Stomach (tissue), 19 donors: ENCODE measurements at regions of chr6 and their contacts with region 1.

Region 1: GRCh38 chr6:33161354-33162331 is 30.6 kb downstream of the COL11A2 start:
- DNase-seq: peak; percentile 81 to 88
- H3K4me3 ChIP-seq: peak overlapping the region; percentile 45 to 57 (median 54)
- H3K27ac ChIP-seq: peak overlapping the region; percentile 37 to 75 (median 52)
- H3K4me1 ChIP-seq: peaks cover 14 to 21% (median 17%) of the 10 kb centered on the region in 4 donors
- H3K27me3 ChIP-seq: peaks cover 0 to 6% (median 0%) of the 10 kb centered on the region in 3 donors
- CTCF ChIP-seq: peak in 5 of 7 experiments; percentile 81 to 97 (median 93)
- EP300 ChIP-seq: no peak
- POLR2A ChIP-seq: no peak

Region 2: GRCh38 chr6:33248925-33249731 is 87.5 kb after region 1 on chr6:
- intact Hi-C with region 1: loop called (anchors 5 kb)
- DNase-seq: peak; percentile 98 to 99
- H3K4me3 ChIP-seq: peak overlapping the region; percentile 45 to 61 (median 52)
- H3K27ac ChIP-seq: peak overlapping the region; percentile 90 to 97 (median 95)
- H3K4me1 ChIP-seq: peaks cover 22 to 40% (median 28%) of the 10 kb centered on the region in 4 donors
- H3K27me3 ChIP-seq: no peaks in the 10 kb centered on the region
- CTCF ChIP-seq: no peak
- EP300 ChIP-seq: no peak
- POLR2A ChIP-seq: peak in 2 of 4 donors; percentile 16 to 90

Region 3: DNA sequence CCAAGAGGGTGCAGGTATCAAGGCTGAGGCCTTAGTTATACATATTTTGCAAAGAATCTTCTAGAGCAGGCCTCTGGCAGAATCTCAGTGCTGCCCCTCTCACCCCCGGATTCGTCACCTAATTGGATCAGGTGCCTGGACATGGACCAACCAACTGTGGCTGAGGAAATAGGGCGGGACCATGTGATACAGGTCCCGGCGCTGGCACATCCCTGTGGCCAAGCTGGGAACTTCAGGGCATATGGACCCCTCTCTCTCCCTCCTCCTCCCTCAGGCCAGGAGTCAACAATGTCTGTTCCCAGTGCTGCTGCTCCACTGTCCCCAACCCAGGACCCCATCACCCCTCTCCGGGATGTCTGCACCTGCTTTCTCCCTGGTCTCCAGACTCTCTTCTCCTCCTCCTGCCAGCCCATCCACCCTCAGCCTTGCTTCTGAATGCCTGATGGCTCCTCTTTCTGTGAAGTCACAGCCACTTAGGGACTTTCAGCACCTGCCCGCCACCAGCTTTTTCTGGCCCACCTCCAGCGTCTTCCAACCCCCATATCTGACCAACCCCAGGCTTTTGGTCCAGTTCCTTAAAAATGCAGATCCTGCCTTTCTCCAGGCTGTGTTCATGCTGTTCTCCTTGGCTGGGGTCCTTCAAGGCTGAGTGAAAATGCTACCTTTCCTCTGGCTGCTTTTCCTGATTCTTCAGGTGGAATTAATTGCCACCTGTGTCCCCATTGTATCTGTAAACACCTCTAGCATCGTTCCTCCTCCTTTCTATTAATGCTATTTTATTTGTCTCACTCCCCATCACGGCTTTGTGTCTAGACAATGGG is 661.1 kb after region 1 on chr6:
- intact Hi-C with region 1: no loop called
- DNase-seq: peak in 1 of 2 donors; percentile 34
- H3K4me3 ChIP-seq: no peak overlapping the region
- H3K27ac ChIP-seq: no peak overlapping the region
- H3K4me1 ChIP-seq: peaks cover 0 to 12% (median 5%) of the 10 kb centered on the region in 4 donors
- H3K27me3 ChIP-seq: peaks cover 0 to 4% (median 0%) of the 10 kb centered on the region in 3 donors
- CTCF ChIP-seq: no peak
- EP300 ChIP-seq: no peak
- POLR2A ChIP-seq: no peak